ENCODE measurements at regions of chr21 and their contacts with region 1.

Region 1: DNA sequence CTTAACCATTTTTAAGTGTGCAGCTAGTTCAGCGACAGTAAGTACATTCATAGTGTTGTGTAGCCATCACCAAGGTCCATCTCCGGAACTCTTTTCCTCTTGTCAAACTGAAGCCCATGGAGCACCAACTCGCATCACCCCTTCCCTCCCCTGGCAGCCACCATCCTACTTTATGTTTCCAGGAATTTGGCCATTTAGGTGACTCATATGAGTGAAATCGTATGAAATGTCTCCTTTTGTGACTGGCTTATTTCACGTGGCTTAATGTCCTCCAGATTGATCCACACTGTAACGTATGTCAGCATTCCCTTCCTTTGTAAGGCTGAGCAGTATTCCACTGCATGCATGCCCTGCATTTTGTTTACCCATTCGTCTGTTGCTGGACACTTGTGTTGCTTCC is 2.5 kb downstream of the COL6A2 start:
- DNase-seq: no peak
- ATAC-seq: no peak

Region 2: GRCh38 chr21:45973659-45974072 is 126.8 kb before region 1 on chr21:
- intact Hi-C with region 1: loop called (anchors 2 kb)
- DNase-seq: peak; percentile 92
- ATAC-seq: peak; percentile 60

Region 3: DNA sequence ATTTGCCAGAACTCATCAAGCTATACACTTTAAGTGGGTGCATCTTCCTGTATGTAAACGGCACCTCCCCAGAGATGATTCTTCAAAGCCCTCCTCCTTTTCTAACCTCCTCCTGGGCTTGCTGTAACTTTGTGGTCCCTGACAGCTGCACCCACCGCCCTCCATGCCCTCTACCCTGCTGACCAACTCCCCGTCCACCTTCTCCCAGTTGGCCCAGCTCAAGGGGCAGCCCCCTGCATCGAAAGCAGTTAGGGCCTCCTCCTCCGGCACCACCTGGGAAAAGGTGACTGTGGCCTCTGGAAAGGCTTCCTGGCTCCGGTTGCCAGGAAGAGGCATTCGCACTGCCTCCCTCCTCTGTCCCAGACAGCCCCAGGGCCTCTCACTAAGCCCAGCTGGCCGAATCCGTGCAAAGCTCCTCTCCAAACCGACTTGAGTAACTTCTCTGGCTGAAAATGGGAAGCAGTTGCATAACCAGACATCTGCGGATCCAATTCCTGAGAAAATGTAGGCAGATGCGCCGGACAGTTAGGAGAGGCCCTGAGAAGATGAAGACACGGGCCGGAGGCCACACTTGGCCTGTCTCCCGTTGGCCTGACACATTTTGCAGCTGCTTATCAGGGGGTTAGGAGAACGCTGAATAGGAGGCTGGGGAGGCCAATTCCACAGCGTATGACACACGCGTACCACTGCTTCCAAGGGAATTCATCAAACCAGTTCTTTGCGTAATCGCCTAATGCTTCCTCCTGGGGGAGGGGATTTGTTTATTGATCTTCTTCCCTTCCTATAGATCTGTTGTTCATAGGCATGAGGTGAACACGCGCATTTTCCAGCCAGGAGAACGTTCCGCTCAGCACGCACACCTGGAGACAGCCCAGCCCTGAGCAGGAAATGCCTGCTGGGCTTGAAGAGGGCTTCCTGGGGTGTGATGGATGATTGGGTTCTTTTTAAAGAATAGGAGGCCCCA is 51.2 kb before region 1 on chr21:
- intact Hi-C with region 1: no loop called
- DNase-seq: peak; percentile 93
- ATAC-seq: peak; percentile 95

Region 4: DNA sequence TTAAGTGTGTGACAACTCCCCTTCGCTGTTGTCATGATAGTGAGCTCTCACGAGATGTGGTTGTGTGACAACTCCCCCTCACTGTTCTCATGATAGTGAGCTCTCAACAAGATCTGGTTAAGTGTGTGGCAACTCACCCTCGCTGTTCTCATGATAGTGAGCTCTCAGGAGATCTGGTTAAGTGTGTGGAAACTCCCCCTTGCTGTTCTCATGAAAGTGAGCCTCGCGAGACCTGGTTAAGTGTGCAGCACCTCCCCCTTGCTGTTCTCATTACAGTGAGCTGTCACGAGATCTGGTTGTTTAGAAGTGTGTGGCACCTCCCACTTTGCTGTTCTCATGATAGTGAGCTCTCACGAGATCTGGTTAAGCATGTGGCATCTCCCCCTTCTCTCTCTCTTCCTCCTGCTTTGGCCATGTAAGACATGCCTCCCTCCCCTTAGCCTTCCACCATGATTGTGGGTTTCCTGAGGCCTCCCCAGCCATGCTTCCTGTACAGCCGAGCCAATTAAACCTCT is 153.2 kb after region 1 on chr21:
- intact Hi-C with region 1: no loop called
- DNase-seq: no peak
- ATAC-seq: no peak

Region 5: DNA sequence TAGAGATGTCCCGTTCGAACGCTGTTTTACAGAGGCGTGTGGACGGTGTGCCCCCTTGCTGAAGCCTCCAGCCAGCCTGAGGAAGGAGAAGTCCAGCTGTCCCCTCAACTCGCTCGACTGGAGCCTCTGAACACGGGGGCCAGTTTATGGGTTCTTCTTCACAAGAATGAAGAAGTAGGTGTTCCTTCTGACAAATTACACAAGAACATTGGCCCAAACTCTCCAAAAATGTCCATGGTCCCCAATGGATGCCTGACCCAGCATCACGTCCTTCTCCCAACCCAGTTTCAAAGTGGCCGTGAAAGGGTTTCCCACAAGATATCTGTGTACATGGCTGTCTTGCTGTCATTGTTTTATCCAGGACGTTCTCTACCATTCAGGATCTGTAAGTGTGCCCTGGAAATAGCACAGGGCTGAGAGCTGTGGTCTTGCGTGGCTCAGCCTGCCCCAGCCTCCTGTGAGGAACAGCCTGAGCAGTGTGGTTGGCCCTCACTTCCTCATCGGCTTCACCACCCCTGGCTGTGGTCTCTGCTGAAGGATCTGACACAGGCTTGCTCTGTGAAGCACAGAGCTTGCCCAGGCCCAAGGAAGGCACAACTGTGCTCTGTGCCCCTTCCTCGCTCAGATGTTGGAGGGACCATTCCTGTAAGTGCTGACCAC is 505.5 kb after region 1 on chr21:
- intact Hi-C with region 1: no loop called
- DNase-seq: peak; percentile 64
- ATAC-seq: peak; percentile 77

Measured in Right ventricle myocardium superior (tissue), 1 donor.